A549 (cell line): ENCODE measurements at regions of chr11 and their contacts with region 1.

Region 1: GRCh38 chr11:72030472-72031045 is 31.9 kb downstream of the IL18BP start:
- DNase-seq: no peak
- ATAC-seq: no peak
- H3K4me3 ChIP-seq: no peak overlapping the region
- H3K27ac ChIP-seq: no peak overlapping the region
- H3K4me1 ChIP-seq: peaks cover 8% of the 10 kb centered on the region
- CTCF ChIP-seq: no peak
- EP300 ChIP-seq: no peak
- POLR2A ChIP-seq: no peak
- RAD21 ChIP-seq: no peak

Region 2: DNA sequence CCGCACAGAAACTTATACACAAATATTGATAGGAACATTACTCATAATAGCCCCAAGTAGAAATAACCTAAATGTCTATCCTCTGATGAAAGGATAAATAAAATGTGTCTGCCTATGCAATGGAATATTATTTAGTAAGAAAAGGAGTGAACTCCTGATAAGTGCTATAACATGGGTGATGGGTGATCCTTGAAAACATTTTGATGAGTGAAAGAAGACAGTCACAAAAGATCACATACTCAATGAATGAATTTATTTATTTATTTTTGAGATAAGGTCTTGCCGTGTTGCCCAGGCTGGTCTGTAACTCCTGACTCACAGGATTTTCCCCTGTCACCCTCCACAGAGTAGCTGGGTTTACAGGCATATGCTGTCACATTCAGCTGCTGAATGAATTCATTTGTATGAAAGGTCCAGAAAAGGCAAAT is 84.4 kb before region 1 on chr11:
- CTCF ChIA-PET with region 1: no interaction called
- POLR2A ChIA-PET with region 1: no interaction called
- DNase-seq: peak; percentile 53 to 77
- ATAC-seq: peak; percentile 70 to 75
- H3K4me3 ChIP-seq: no peak overlapping the region
- H3K27ac ChIP-seq: peak overlapping the region; percentile 87 to 92
- H3K4me1 ChIP-seq: peaks cover 84% of the 10 kb centered on the region
- CTCF ChIP-seq: no peak
- EP300 ChIP-seq: peak in 1 of 2 experiments; percentile 38; a peak in 1 of 5 replicates
- POLR2A ChIP-seq: no peak
- RAD21 ChIP-seq: peak; percentile 8; a peak in 1 of 5 replicates

Region 3: DNA sequence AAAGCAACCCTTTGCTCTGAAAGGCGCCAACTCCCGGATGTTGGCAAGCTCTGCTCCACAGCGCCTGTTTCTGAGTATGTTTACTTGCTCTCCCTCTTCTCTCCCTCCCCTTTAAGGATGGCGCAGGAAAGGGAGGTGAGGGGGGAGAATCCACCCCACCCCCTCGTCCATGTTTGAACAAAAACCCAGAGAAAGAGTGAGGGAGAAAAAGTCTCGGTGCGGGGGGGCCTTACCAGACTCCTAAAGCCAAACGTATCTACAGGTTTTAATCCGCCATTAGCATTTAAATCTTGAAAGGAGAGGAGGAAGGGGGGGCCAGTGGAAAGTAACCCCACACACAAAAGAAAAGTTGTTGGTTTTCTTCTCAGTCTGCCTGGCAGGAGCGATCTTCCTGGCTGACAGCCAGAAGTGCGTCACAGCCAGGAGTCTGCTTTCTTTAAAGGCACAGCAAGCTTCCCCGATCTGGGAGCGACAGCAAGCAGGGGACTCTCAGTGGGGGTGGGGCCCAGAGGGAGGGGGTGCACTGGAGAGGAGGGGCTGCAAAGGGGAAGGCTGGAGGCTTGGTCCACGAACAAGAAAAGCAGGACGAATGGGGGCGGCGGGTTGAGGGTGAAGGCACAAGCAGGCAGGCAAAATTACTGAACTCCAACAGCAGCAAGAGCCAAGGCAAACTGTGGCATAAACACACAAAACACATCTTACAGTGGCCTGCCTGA is 10.3 kb after region 1 on chr11:
- CTCF ChIA-PET with region 1: interaction called, 123 read pairs
- POLR2A ChIA-PET with region 1: interaction called, 8 read pairs
- DNase-seq: peak; percentile 88 to 90
- ATAC-seq: peak; percentile 82 to 83
- H3K4me3 ChIP-seq: peak overlapping the region; percentile 64
- H3K27ac ChIP-seq: peak overlapping the region; percentile 93
- H3K4me1 ChIP-seq: peaks cover 36% of the 10 kb centered on the region
- CTCF ChIP-seq: no peak
- EP300 ChIP-seq: no peak
- POLR2A ChIP-seq: no peak
- RAD21 ChIP-seq: no peak

Region 4: GRCh38 chr11:72080256-72080974 is 49.9 kb after region 1 on chr11 and contains the starts of genes LRRC51 and NUMA1:
- CTCF ChIA-PET with region 1: interaction called, 52 read pairs
- POLR2A ChIA-PET with region 1: no interaction called
- DNase-seq: peak; percentile 91 to 100
- ATAC-seq: peak; percentile 96 to 97
- H3K4me3 ChIP-seq: peak within 1 kb of the TSS; percentile 85
- H3K27ac ChIP-seq: peak within 1 kb of the TSS; percentile 90
- H3K4me1 ChIP-seq: peaks cover 19% of the 10 kb centered on the region
- CTCF ChIP-seq: no peak
- EP300 ChIP-seq: no peak
- POLR2A ChIP-seq: peak; percentile 54
- RAD21 ChIP-seq: no peak
- polyA plus RNA-seq, gene LRRC51: 14.3 and 16.3 TPM in 2 replicates
- polyA plus RNA-seq, gene NUMA1: 51.5 and 64.6 TPM in 2 replicates

Region 5: GRCh38 chr11:72091005-72091691 is 60.6 kb after region 1 on chr11:
- CTCF ChIA-PET with region 1: interaction called, 354 read pairs
- POLR2A ChIA-PET with region 1: interaction called, 6 read pairs
- DNase-seq: peak; percentile 67 to 84
- ATAC-seq: peak; percentile 94 to 95
- H3K4me3 ChIP-seq: no peak overlapping the region
- H3K27ac ChIP-seq: peak overlapping the region in 1 of 2 experiments; percentile 29; a peak in 2 of 6 replicates
- H3K4me1 ChIP-seq: peaks cover 6% of the 10 kb centered on the region
- CTCF ChIP-seq: peak; percentile 86
- EP300 ChIP-seq: no peak
- POLR2A ChIP-seq: no peak
- RAD21 ChIP-seq: peak; percentile 75 to 83

Region 6: GRCh38 chr11:72238040-72238450 is 207.5 kb after region 1 on chr11:
- CTCF ChIA-PET with region 1: interaction called, 17 read pairs
- POLR2A ChIA-PET with region 1: no interaction called
- DNase-seq: peak; percentile 82 to 92
- ATAC-seq: peak; percentile 70 to 86
- H3K4me3 ChIP-seq: no peak overlapping the region
- H3K27ac ChIP-seq: no peak overlapping the region
- H3K4me1 ChIP-seq: peaks cover 12% of the 10 kb centered on the region
- CTCF ChIP-seq: peak; percentile 71
- EP300 ChIP-seq: no peak
- POLR2A ChIP-seq: no peak
- RAD21 ChIP-seq: peak; percentile 63 to 65